Endothelial cell of umbilical vein (primary cell): ENCODE measurements at regions of chr14 and their contacts with region 1.

Region 1: GRCh38 chr14:75906676-75907280 is 75.0 kb downstream of the TGFB3 start:
- DNase-seq: peak; percentile 66
- H3K4me3 ChIP-seq: no peak overlapping the region
- H3K27ac ChIP-seq: no peak overlapping the region
- H3K4me1 ChIP-seq: peaks cover 3% of the 10 kb centered on the region
- H3K27me3 ChIP-seq: no peaks in the 10 kb centered on the region
- CTCF ChIP-seq: peak; percentile 67 to 73
- POLR2A ChIP-seq: no peak

Region 2: GRCh38 chr14:75709207-75709812 is 197.5 kb before region 1 on chr14:
- CTCF ChIA-PET with region 1: interaction called, 56 read pairs
- POLR2A ChIA-PET with region 1: no interaction called
- dilution Hi-C with region 1: no loop called
- intact Hi-C with region 1: loop called (anchors 2 kb)
- DNase-seq: peak; percentile 79
- H3K4me3 ChIP-seq: no peak overlapping the region
- H3K27ac ChIP-seq: no peak overlapping the region
- H3K4me1 ChIP-seq: no peaks in the 10 kb centered on the region
- H3K27me3 ChIP-seq: no peaks in the 10 kb centered on the region
- CTCF ChIP-seq: peak; percentile 72 to 75
- POLR2A ChIP-seq: no peak

Region 3: DNA sequence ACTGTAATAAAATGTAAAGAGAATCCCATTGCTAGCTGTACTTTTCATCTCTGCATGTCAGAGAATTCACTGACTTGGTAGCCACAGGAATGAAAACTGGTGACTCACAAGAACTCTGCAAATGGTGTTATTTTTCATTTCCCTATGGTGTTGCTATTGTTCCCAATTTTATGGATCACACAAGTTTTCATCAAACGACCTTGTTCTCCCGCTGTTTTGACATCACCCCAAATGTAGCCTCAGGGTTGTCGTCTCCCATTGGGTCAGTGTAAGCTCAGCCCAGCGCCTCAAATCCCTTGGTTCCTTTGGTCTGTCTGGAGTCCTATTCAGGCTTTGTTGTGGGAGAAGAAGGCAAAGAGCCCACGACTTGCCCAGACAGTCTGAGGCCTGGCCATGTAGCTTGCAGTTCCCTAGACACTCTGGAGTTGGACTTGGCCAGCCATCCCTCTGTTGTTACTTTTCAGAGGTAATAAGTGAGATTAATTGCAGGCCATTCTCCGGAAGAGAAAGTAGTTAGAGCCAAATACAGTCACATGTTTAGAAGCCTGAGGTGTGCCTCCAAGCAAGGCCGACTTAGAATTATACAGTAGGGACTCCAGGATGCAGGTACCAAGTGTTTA is 84.1 kb before region 1 on chr14:
- CTCF ChIA-PET with region 1: interaction called, 17 read pairs
- POLR2A ChIA-PET with region 1: no interaction called
- dilution Hi-C with region 1: no loop called
- intact Hi-C with region 1: no loop called
- DNase-seq: no peak
- H3K4me3 ChIP-seq: no peak overlapping the region
- H3K27ac ChIP-seq: no peak overlapping the region
- H3K4me1 ChIP-seq: no peaks in the 10 kb centered on the region
- H3K27me3 ChIP-seq: no peaks in the 10 kb centered on the region
- CTCF ChIP-seq: no peak
- POLR2A ChIP-seq: no peak

Region 4: GRCh38 chr14:75871181-75871880 is 35.4 kb before region 1 on chr14:
- CTCF ChIA-PET with region 1: interaction called, 52 read pairs
- POLR2A ChIA-PET with region 1: no interaction called
- dilution Hi-C with region 1: no loop called
- intact Hi-C with region 1: no loop called
- DNase-seq: peak; percentile 91
- H3K4me3 ChIP-seq: peak overlapping the region in 1 of 3 experiments; percentile 18
- H3K27ac ChIP-seq: peak overlapping the region; percentile 98
- H3K4me1 ChIP-seq: peaks cover 59% of the 10 kb centered on the region
- H3K27me3 ChIP-seq: no peaks in the 10 kb centered on the region
- CTCF ChIP-seq: no peak
- POLR2A ChIP-seq: peak; percentile 48

Region 5: DNA sequence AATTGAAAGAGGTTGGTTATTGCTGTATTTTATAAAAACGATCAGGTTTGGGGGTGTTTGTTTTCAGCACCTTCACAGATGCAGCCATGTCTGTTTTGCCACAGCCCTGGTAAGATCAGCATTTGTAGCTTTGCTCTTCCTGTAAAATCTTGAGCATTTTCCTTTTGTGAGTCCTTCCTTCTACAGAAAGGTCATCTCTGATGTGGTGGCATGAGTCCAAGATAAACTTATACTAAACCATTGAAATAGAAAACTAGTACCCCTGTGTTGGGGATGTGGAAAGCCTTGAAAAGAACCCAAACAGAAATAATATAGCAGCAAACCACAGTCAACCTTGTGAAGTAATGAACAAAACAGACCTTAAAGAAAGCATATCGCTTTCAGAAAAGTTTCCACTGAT is 10.4 kb before region 1 on chr14:
- CTCF ChIA-PET with region 1: interaction called, 86 read pairs
- POLR2A ChIA-PET with region 1: interaction called, 4 read pairs
- dilution Hi-C with region 1: no loop called
- intact Hi-C with region 1: no loop called
- DNase-seq: peak; percentile 61
- H3K4me3 ChIP-seq: no peak overlapping the region
- H3K27ac ChIP-seq: no peak overlapping the region
- H3K4me1 ChIP-seq: peaks cover 12% of the 10 kb centered on the region
- H3K27me3 ChIP-seq: no peaks in the 10 kb centered on the region
- CTCF ChIP-seq: no peak
- POLR2A ChIP-seq: no peak

Region 6: DNA sequence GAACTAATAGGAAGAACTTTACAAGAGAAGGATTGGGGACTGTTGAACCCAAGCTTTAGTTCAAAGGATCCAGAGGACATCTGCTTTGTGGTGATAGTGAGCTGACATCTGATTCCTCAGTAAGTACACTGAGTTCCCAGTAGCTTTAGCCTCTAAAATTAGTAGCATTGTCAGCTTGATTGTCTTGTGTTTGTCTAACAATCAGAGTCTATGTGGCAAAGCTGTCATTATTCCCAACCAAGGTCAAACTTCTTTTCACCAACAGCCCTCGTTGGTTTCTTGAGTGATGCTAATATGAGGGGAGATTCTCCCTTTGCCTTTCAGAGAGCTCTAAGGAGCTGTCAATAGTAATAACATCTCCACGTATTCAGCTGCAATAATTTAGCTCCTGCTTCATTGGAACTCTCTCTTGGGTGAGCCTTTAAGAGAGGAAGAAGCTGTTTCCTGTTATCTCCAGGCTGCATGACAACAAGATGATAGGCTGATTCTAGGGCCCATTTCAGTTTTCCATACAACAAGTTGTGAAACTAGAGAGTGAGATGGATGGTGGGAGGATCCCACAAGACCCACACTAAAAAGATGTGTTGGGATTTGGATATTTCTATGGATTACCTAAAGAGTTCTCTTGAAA is 28.3 kb after region 1 on chr14:
- CTCF ChIA-PET with region 1: interaction called, 37 read pairs
- POLR2A ChIA-PET with region 1: no interaction called
- dilution Hi-C with region 1: no loop called
- intact Hi-C with region 1: no loop called
- DNase-seq: no peak
- H3K4me3 ChIP-seq: no peak overlapping the region
- H3K27ac ChIP-seq: no peak overlapping the region
- H3K4me1 ChIP-seq: no peaks in the 10 kb centered on the region
- H3K27me3 ChIP-seq: no peaks in the 10 kb centered on the region
- CTCF ChIP-seq: no peak
- POLR2A ChIP-seq: no peak

Region 7: DNA sequence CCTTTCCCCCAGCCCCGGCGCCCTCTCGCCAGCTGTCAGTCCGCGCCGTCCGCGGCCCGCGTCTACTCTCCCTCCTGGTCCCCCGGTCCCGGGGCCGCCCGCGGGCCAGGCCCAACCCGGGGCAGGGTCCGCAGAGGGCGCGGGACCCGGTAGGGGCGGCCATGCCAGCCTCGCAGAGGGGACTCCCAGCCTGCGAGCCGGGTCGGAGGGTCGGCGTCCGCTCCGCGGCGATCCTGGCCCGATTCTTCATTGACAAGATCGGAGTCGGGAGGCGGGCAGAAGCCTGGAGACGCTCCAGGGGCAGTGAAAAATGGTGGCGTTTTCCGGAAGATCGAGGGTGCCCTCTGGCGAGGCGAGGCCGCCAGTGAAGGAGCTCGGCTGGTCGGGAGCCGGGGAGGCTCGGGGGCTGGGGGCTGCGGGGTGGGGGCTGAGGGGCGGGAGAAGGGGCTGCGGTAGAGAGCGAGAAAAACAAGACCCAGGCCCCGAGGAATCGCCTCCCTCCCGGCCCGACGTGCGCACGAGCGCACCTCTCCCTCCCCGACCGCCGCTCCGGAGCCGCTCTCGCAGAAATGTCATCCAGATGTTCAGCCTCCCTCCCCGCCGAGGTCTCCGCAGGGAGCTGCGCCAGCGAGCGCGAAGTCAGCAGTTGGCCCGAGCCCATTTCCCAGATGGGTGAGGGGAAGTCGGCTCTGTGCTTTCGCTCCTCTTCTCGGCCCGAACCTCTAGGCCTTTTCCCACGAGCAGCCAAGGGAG is 75.7 kb after region 1 on chr14:
- CTCF ChIA-PET with region 1: interaction called, 282 read pairs
- POLR2A ChIA-PET with region 1: no interaction called
- dilution Hi-C with region 1: no loop called
- intact Hi-C with region 1: loop called (anchors 1 kb)
- DNase-seq: peak; percentile 78
- H3K4me3 ChIP-seq: peak overlapping the region; percentile 66 to 73 (median 68)
- H3K27ac ChIP-seq: peak overlapping the region; percentile 62
- H3K4me1 ChIP-seq: peaks cover 28% of the 10 kb centered on the region
- H3K27me3 ChIP-seq: no peaks in the 10 kb centered on the region
- CTCF ChIP-seq: peak; percentile 32 to 74
- POLR2A ChIP-seq: no peak